ENCODE measurements at regions of chr6 and their contacts with region 1.

Region 1: GRCh38 chr6:16939839-16940238 is 162.0 kb upstream of the STMND1 start:
- DNase-seq: no peak
- ATAC-seq: no peak
- H3K4me3 Mint-ChIP-seq: no peak overlapping the region
- H3K27ac Mint-ChIP-seq: no peak overlapping the region
- H3K4me1 Mint-ChIP-seq: no peaks in the 10 kb centered on the region
- H3K27me3 Mint-ChIP-seq: peaks cover 42% of the 10 kb centered on the region
- CTCF ChIP-seq: no peak

Region 2: DNA sequence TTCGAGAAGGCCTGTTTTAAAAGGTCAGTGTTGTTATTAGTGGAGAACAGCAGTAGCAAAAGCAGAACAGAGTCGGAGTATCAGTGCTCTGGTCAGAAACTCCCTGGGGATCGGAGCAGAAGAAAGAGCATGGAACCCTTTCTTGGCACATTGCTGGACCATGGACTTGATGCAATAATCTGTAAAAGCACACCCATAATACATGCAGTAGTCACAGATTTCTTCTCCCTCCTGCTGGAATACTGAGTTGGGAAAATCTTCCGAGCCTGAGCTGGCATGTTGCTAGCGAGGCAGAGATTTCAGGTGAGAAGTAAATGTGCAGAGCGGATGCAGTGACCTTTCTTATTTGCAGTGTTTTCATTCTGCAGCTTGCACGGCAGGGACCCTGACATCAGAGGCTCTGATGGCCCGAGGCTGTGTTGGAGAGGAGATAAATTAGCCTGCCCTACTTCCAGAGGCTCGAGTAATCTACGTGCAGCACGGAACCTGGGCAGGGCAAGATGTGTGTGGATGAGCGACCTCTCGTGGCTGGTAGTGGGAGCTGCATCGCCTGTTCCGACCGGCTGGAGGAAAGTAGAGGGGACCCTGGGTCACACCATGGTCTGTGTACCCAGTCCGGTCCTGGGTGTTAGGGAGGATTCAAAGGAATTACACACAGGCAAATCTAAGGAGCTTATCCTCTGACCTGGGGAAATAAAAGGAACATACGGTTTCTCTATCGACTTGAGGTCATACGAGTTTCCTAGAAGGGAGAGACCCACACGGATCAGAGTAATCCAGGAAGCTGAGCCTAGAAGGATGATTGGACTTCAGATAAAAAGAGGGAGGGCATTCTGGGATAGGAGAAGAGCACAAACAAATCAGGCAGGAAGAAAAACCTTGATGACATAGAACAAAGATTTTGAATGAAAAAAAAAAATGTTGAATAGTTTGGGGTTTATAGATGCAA is 25.0 kb after region 1 on chr6:
- CTCF ChIA-PET with region 1: interaction called, 14 read pairs
- POLR2A ChIA-PET with region 1: no interaction called
- intact Hi-C with region 1: no loop called
- DNase-seq: peak; percentile 82
- ATAC-seq: peak; percentile 98
- H3K4me3 Mint-ChIP-seq: no peak overlapping the region
- H3K27ac Mint-ChIP-seq: no peak overlapping the region
- H3K4me1 Mint-ChIP-seq: peaks cover 16% of the 10 kb centered on the region
- H3K27me3 Mint-ChIP-seq: peaks cover 21% of the 10 kb centered on the region
- CTCF ChIP-seq: peak; percentile 77

Measured in activated CD8-positive, alpha-beta T cell treated with anti-CD3 and anti-CD28 coated beads for 36 hours (primary cell).